IMR-90 (cell line): ENCODE measurements at regions of chr14 and their contacts with region 1.

Region 1: GRCh38 chr14:51663783-51664326 is 12.1 kb downstream of the FRMD6 start:
- DNase-seq: no peak
- ATAC-seq: no peak
- H3K4me3 ChIP-seq: no peak overlapping the region
- H3K27ac ChIP-seq: no peak overlapping the region
- H3K4me1 ChIP-seq: peaks cover 14% of the 10 kb centered on the region
- H3K27me3 ChIP-seq: no peaks in the 10 kb centered on the region
- CTCF ChIP-seq: no peak
- POLR2A ChIP-seq: no peak
- RAD21 ChIP-seq: no peak

Region 2: GRCh38 chr14:51677266-51677665 is 13.4 kb after region 1 on chr14:
- CTCF ChIA-PET with region 1: no interaction called
- POLR2A ChIA-PET with region 1: no interaction called
- dilution Hi-C with region 1: no loop called
- in situ Hi-C with region 1: no loop called
- intact Hi-C with region 1: loop called (anchors 2 kb)
- DNase-seq: peak; percentile 63
- ATAC-seq: no peak
- H3K4me3 ChIP-seq: no peak overlapping the region
- H3K27ac ChIP-seq: peak overlapping the region; percentile 51; the same call in 1 of the 2 replicates
- H3K4me1 ChIP-seq: peaks cover 24% of the 10 kb centered on the region
- H3K27me3 ChIP-seq: no peaks in the 10 kb centered on the region
- CTCF ChIP-seq: no peak
- POLR2A ChIP-seq: no peak
- RAD21 ChIP-seq: no peak